ENCODE measurements at regions of chr4 and their contacts with region 1.

Region 1: GRCh38 chr4:10180927-10181782 is 64.6 kb upstream of the WDR1 start:
- DNase-seq: peak; percentile 80
- H3K4me3 Mint-ChIP-seq: peak overlapping the region; percentile 40
- H3K27ac Mint-ChIP-seq: peak overlapping the region; percentile 91
- H3K4me1 Mint-ChIP-seq: peaks cover 36% of the 10 kb centered on the region
- H3K27me3 Mint-ChIP-seq: no peaks in the 10 kb centered on the region

Region 2: GRCh38 chr4:10096201-10096977 is 84.8 kb before region 1 on chr4:
- intact Hi-C with region 1: loop called (anchors 1 kb)
- DNase-seq: peak; percentile 92
- H3K4me3 Mint-ChIP-seq: peak overlapping the region; percentile 66
- H3K27ac Mint-ChIP-seq: peak overlapping the region; percentile 94
- H3K4me1 Mint-ChIP-seq: peaks cover 89% of the 10 kb centered on the region
- H3K27me3 Mint-ChIP-seq: no peaks in the 10 kb centered on the region

Region 3: DNA sequence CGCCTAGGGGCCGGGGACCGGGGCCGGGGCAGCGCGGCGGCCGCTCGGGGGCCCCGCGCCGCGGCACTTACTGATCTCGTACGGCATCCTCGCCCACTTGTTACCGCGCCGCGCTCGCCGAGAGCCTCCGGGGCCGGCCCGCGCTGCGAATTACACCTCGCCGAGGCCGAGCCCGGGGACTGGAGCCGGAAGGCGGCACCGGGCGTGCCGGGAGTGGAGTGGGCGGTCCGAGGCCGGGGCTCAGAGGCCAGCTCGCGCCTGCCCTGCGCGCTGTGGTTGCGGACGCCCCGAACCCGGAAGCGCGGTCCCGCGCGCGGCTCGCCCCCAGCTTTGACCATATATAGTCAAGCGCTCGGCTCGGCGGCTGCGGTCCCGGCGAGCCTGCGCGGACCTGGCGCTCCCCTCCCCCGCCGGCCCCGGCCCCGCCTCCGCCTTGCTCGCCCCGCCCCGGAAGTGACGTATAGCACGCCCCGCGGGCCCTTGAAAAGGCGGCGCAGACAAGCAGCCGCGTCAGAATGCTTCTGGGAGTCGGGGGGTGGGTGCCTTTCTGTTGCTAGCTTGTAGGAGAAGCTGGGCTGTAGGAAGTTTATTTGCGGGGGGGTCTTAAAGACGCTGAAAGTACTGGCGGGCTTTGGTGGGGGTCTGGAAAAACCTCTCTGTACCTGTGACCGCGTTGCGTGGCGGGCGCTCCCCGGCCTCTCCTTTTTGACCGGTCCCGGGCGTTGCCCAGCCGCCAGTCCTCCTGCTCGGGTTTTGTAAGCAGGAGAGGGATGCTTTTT is 64.4 kb before region 1 on chr4 and contains the start of gene WDR1:
- intact Hi-C with region 1: loop called (anchors 1 kb)
- DNase-seq: peak; percentile 97
- H3K4me3 Mint-ChIP-seq: peak within 1 kb of the TSS; percentile 98
- H3K27ac Mint-ChIP-seq: peak within 1 kb of the TSS; percentile 95
- H3K4me1 Mint-ChIP-seq: peaks cover 70% of the 10 kb centered on the region
- H3K27me3 Mint-ChIP-seq: no peaks in the 10 kb centered on the region
- total RNA-seq, gene WDR1: 369 and 376 TPM in 2 replicates

Region 4: DNA sequence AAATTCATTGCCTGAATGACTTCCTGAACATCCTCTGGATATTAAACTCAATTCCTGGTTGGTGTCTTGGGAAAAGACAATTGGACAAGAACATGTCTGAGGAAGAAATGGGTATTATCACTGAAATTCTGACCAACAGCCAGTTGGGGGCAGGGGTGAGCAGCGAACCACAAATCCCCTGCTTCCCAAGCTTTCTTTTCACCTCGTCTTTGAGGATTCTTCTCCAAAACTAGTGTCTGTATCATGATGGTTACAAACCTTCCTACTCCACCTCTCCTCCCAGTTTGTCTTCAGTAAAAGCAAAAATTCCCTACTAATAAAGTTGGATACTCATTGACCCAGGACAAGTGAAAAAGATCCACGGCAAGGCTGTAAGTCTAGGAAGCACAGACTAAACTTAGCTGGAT is 16.3 kb before region 1 on chr4:
- intact Hi-C with region 1: loop called (anchors 2 kb)
- DNase-seq: peak; percentile 64
- H3K4me3 Mint-ChIP-seq: no peak overlapping the region
- H3K27ac Mint-ChIP-seq: no peak overlapping the region
- H3K4me1 Mint-ChIP-seq: peaks cover 21% of the 10 kb centered on the region
- H3K27me3 Mint-ChIP-seq: peaks cover 2% of the 10 kb centered on the region

Region 5: DNA sequence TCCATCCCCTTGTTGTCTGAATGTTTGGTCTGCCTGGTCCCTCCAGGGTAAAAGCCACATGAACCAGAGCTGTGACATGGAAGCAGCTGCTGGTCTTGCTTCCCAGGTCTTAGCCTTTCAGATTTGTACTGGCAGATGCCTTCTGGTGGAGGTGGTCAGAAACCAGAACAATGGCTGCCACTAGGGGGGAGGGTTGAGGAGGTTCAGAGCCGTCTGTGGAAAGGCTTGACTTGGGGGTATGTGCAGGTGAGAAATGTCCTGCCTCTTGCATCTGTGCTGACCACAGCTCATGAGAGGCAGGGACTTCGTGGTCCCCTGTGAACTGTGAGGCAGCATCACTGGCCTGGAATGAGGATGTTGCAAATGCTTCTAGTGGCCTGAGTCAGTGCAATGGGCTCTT is 79.6 kb after region 1 on chr4:
- intact Hi-C with region 1: no loop called
- DNase-seq: no peak
- H3K4me3 Mint-ChIP-seq: no peak overlapping the region
- H3K27ac Mint-ChIP-seq: no peak overlapping the region
- H3K4me1 Mint-ChIP-seq: no peaks in the 10 kb centered on the region
- H3K27me3 Mint-ChIP-seq: peaks cover 4% of the 10 kb centered on the region

Region 6: GRCh38 chr4:10403633-10404445 is 222.7 kb after region 1 on chr4:
- intact Hi-C with region 1: loop called (anchors 5 kb)
- DNase-seq: peak; percentile 73
- H3K4me3 Mint-ChIP-seq: no peak overlapping the region
- H3K27ac Mint-ChIP-seq: no peak overlapping the region
- H3K4me1 Mint-ChIP-seq: no peaks in the 10 kb centered on the region
- H3K27me3 Mint-ChIP-seq: no peaks in the 10 kb centered on the region

Region 7: DNA sequence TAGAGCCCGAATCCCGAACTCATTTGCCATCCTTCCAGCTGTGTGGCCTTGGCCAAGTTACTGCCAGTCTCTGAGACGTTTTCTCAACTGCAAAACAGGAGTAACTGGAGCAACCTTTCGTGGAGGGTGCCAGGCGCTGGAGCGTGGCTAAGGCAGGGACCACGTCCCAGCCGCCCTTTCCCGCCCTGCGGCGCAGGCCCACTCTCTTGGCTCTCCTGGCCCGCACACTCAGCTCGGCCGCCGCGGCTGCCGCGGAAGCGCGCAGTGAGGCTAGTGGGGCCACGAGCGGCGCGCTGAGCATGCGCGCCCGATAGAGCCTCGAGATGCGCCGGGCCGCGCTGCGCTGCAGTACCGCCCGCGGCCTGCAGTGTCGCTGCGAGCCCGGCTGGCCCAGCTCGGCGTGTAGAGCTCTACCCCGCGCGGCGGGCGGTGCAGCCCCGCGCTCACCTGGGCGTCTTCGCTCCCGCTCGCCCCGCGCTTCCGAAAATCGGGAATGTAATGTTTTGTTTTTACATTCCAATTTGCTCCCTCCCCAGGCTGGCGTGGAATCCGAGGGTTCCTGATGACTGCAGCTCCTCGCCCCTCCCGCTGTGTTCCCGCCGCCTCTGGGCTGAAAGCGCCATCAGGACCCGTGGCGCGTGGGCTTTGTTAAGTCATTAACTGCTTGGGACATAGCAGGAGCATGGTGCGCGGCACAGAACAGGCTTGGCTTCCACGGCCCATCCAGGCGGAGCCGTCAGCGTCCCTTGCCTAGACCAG is 280.1 kb after region 1 on chr4:
- intact Hi-C with region 1: loop called (anchors 5 kb)
- DNase-seq: peak; percentile 95
- H3K4me3 Mint-ChIP-seq: peak overlapping the region; percentile 84
- H3K27ac Mint-ChIP-seq: peak overlapping the region; percentile 22
- H3K4me1 Mint-ChIP-seq: peaks cover 30% of the 10 kb centered on the region
- H3K27me3 Mint-ChIP-seq: peaks cover 37% of the 10 kb centered on the region

Measured in activated CD4-positive, alpha-beta T cell treated with anti-CD3 and anti-CD28 coated beads, Interleukin-2, amount 10 ng/mL, durations not matched to agents 24 days and 14 days (primary cell).